ENCODE measurements at regions of chr6 and their contacts with region 1.

Region 1: GRCh38 chr6:150420926-150421325 is 52.1 kb downstream of the IYD start:
- DNase-seq: no peak
- H3K4me3 ChIP-seq: no peak overlapping the region
- H3K27ac ChIP-seq: no peak overlapping the region
- H3K4me1 ChIP-seq: peaks cover 0 to 18% (median 14%) of the 10 kb centered on the region in 4 donors
- H3K27me3 ChIP-seq: no peaks in the 10 kb centered on the region
- CTCF ChIP-seq: no peak
- EP300 ChIP-seq: no peak
- POLR2A ChIP-seq: no peak

Region 2: GRCh38 chr6:150813319-150813992 is 392.5 kb after region 1 on chr6:
- intact Hi-C with region 1: loop called (anchors 5 kb)
- DNase-seq: peak in 1 of 2 donors; percentile 51
- H3K4me3 ChIP-seq: no peak overlapping the region
- H3K27ac ChIP-seq: peak overlapping the region in 2 of 5 donors; percentile 3 to 67
- H3K4me1 ChIP-seq: peaks cover 0 to 11% (median 2%) of the 10 kb centered on the region in 4 donors
- H3K27me3 ChIP-seq: peaks cover 0 to 5% (median 0%) of the 10 kb centered on the region in 3 donors
- CTCF ChIP-seq: no peak
- EP300 ChIP-seq: no peak
- POLR2A ChIP-seq: no peak

Measured in stomach (tissue), 19 donors.